AG04450 (cell line): ENCODE measurements at regions of chr2 and their contacts with region 1.

Region 1: DNA sequence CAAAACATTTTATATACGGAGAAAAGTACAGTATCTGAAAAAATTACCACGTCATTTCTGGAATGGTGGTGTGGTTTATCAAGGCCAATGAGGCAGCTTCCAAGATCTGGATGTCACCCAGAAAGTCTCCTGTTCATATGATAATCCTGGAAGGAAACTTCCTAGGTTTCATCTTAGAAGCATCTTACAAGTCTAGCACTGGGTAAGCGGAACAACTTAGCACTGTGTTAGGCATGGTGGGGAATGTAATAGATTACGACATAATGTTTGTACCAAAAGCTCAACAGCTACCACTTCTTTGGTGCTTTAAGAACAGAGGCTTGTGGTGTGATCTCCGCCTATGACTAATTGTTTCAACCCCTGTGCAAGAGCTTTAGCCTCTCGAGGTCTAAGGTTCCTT is 63.1 kb upstream of the LYPD1 start:
- DNase-seq: no peak
- H3K4me3 ChIP-seq: no peak overlapping the region
- H3K27ac ChIP-seq: no peak overlapping the region
- H3K27me3 ChIP-seq: no peaks in the 10 kb centered on the region
- CTCF ChIP-seq: no peak

Region 2: GRCh38 chr2:132766573-132766972 is 33.5 kb after region 1 on chr2:
- CTCF ChIA-PET with region 1: no interaction called
- POLR2A ChIA-PET with region 1: interaction called, 10 read pairs
- DNase-seq: no peak
- H3K4me3 ChIP-seq: no peak overlapping the region
- H3K27ac ChIP-seq: no peak overlapping the region
- H3K27me3 ChIP-seq: no peaks in the 10 kb centered on the region
- CTCF ChIP-seq: no peak

Region 3: GRCh38 chr2:132876744-132877391 is 143.8 kb after region 1 on chr2:
- CTCF ChIA-PET with region 1: no interaction called
- POLR2A ChIA-PET with region 1: no interaction called
- DNase-seq: no peak
- H3K4me3 ChIP-seq: no peak overlapping the region
- H3K27ac ChIP-seq: no peak overlapping the region
- H3K27me3 ChIP-seq: no peaks in the 10 kb centered on the region
- CTCF ChIP-seq: no peak